Right ventricle myocardium inferior (tissue), 1 donor: ENCODE measurements at regions of chr13 and their contacts with region 1.

Region 1: GRCh38 chr13:40401911-40402776 is 264.3 kb downstream of the FOXO1 start:
- DNase-seq: peak; percentile 98
- ATAC-seq: peak; percentile 97

Region 2: GRCh38 chr13:40026174-40026585 is 376.0 kb before region 1 on chr13:
- intact Hi-C with region 1: no loop called
- DNase-seq: no peak
- ATAC-seq: no peak

Region 3: DNA sequence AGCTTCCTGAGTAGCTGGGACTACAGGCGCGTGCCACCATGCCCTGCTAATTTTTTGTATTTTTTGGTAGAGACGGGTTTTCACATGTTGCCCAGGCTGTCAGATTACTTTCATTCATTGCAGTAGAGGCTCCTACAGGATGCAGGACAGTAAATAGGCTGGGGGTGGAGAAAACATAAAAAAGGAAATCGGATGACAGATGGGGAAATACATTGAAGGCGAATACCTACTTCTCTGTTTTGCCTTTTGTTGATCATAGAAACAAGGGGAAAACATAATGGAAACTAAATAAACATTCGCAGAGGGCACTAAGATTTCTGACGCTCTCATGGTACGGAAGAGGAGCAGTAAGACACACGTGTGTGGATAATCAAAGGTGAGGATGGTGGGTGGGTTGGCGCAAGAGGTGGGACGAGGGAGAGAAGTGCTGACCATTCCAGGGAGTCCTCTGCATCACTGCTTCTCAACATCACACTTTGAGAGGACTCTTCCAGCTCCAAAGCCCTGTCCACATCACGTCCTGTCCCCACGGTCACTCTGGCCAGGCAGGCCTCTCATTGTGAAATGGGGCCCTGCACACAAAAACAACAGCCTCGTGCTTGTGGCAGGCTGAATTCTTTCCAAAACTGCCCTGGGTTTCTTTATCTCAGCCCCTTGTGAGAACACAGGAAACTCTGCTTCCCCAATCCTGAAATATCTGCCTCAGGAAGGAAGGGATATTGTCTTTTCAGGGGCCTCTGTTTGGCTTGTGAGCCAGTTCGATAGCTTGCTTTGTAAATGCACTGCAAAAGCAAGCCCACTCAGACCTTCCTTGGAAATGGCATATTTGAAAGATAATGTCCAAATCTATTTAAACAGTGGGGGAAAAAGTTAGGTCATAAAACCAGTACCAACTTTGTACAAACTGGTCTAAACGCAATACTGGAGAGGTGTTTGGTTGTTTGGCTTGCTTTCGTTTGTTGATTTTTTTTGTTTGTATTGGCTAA is 75.8 kb after region 1 on chr13:
- intact Hi-C with region 1: loop called (anchors 10 kb)
- DNase-seq: no peak
- ATAC-seq: peak; percentile 86